Left ventricle myocardium inferior (tissue), 1 donor: ENCODE measurements at regions of chr4 and their contacts with region 1.

Region 1: DNA sequence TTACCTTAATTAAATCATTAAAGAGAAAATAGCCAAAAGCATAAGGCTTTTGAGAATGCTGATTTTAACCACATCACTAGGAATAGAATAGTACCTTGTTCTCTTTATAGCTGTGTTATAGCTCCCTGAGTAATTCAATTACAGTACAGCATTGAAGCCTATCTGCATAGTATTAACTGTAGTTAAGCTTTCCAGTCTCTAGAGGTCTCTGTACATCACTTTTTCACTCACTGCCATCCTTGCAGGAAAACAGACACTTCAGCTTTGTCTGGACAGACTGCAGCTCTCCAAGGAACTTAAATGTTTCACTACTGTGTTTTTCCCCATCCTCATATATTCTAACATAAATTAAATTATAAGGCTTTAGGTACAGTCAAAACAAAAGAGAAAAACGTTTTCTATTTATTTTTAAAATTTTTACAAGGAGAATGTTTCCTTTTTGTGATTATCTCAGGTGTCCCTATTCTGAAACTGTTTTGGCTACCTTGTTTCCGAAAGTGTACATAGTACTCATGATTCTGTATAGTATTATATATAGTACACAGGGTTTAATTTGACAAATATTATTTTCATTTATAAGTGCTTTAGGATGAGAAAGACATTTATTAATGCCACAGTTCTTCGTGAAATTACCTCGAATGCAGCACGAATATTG is 407.9 kb downstream of the PCDH18 start:
- DNase-seq: no peak
- H3K4me3 ChIP-seq: peak overlapping the region; percentile 56
- H3K27ac ChIP-seq: no peak overlapping the region
- H3K4me1 ChIP-seq: no peaks in the 10 kb centered on the region
- H3K27me3 ChIP-seq: no peaks in the 10 kb centered on the region
- CTCF ChIP-seq: peak; percentile 72

Region 2: GRCh38 chr4:137060706-137061105 is 63.7 kb before region 1 on chr4:
- intact Hi-C with region 1: no loop called
- DNase-seq: no peak
- H3K4me3 ChIP-seq: no peak overlapping the region
- H3K27ac ChIP-seq: no peak overlapping the region
- H3K4me1 ChIP-seq: no peaks in the 10 kb centered on the region
- H3K27me3 ChIP-seq: no peaks in the 10 kb centered on the region
- CTCF ChIP-seq: no peak

Region 3: GRCh38 chr4:137378821-137379220 is 254.4 kb after region 1 on chr4:
- intact Hi-C with region 1: no loop called
- DNase-seq: no peak
- H3K4me3 ChIP-seq: no peak overlapping the region
- H3K27ac ChIP-seq: no peak overlapping the region
- H3K4me1 ChIP-seq: no peaks in the 10 kb centered on the region
- H3K27me3 ChIP-seq: no peaks in the 10 kb centered on the region
- CTCF ChIP-seq: no peak

Region 4: DNA sequence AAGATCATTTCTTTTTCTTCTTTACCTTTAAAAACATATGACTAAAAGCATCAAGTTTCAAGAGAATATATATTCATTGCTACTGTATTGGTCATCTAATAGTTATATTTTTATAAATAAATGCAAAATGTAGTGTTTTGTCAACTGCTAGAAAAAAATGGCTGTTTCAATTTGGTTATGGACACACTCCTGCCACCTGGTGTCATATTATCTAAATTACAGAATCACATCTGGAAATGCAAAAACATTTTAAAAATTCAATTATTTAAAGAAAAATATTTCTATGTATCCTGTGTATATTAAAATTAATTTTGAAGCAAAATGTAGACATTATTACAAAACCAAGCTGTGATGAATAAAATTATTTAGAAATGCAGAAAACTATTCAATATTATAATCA is 737.3 kb after region 1 on chr4:
- intact Hi-C with region 1: loop called (anchors 10 kb)
- DNase-seq: no peak
- H3K4me3 ChIP-seq: no peak overlapping the region
- H3K27ac ChIP-seq: no peak overlapping the region
- H3K4me1 ChIP-seq: no peaks in the 10 kb centered on the region
- H3K27me3 ChIP-seq: no peaks in the 10 kb centered on the region
- CTCF ChIP-seq: peak; percentile 57